ENCODE measurements at regions of chr17 and their contacts with region 1.

Region 1: DNA sequence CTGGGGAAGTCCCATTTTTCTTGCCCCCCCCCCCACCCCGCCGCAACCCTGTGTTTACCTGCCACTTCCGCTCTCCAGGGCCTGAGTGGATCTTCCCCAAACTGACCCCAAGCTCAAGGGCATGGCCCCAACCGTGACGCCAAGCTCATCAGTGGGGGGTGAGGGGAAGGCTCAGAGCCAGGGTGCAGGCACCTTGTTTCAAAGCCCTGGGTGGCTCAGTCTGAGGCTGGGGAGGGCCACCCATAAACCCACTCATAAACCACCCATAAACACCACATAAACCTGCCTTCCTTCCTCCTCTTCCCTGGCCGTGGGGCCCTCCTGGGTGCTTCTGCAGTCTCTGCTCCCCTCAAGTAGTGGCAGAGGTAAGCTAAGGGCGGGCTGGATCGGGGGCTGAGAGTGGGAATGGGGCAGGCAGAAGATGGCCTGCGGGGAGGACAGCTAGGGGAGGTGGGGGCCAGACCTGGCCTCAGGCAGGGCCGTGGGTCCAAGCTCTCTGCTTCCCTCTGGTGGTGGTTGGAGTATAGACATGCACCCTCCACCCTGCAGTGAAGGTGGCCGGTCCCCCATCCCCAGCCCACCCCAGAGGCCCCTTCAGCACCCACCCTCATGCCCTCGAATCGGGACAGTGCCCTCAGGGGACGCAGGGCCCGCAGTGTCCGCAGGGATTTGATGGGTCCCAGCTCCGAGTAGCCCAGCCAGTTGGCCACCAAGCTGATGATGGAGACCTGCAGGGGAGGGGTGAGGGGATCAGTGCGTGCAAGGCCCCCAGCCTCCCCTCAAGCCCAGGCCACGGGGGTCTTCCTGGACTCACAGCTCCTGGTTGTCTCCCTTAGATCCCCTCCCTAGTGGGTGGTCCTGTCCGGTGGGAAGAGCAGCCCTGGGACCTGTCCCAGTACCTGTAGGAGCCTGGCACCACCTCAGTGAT is 14.6 kb upstream of the CD79B start:
- DNase-seq: peak; percentile 53 to 65 (median 63)
- H3K4me3 ChIP-seq: peak overlapping the region in 1 of 3 experiments; percentile 72
- H3K4me3 Mint-ChIP-seq: peak overlapping the region; percentile 52 to 77
- H3K27ac ChIP-seq: no peak overlapping the region
- H3K27ac Mint-ChIP-seq: peak overlapping the region in 3 of 7 donors; percentile 43 to 86 (median 84)
- H3K4me1 ChIP-seq: peaks cover 9 to 10% of the 10 kb centered on the region in 2 donors
- H3K4me1 Mint-ChIP-seq: peaks cover 6% of the 10 kb centered on the region
- H3K27me3 ChIP-seq: no peaks in the 10 kb centered on the region
- H3K27me3 Mint-ChIP-seq: peaks cover 0 to 7% (median 4%) of the 10 kb centered on the region in 3 donors
- CTCF ChIP-seq: peak; percentile 94

Region 2: GRCh38 chr17:63904316-63904715 is 42.4 kb before region 1 on chr17:
- intact Hi-C with region 1: loop called in 1 of 2 experiments (anchors 5 kb)
- DNase-seq: no peak
- H3K4me3 ChIP-seq: no peak overlapping the region
- H3K4me3 Mint-ChIP-seq: no peak overlapping the region
- H3K27ac ChIP-seq: no peak overlapping the region
- H3K27ac Mint-ChIP-seq: no peak overlapping the region
- H3K4me1 ChIP-seq: no peaks in the 10 kb centered on the region
- H3K4me1 Mint-ChIP-seq: peaks cover 3% of the 10 kb centered on the region
- H3K27me3 ChIP-seq: no peaks in the 10 kb centered on the region
- H3K27me3 Mint-ChIP-seq: peaks cover 1 to 8% (median 7%) of the 10 kb centered on the region in 3 donors
- CTCF ChIP-seq: no peak

Region 3: GRCh38 chr17:63919311-63919723 is 27.4 kb before region 1 on chr17:
- intact Hi-C with region 1: loop called in 1 of 2 experiments (anchors 2 kb)
- DNase-seq: peak; percentile 65 to 76 (median 71)
- H3K4me3 ChIP-seq: no peak overlapping the region
- H3K4me3 Mint-ChIP-seq: no peak overlapping the region
- H3K27ac ChIP-seq: no peak overlapping the region
- H3K27ac Mint-ChIP-seq: peak overlapping the region in 2 of 7 donors; percentile 47 to 55
- H3K4me1 ChIP-seq: peaks cover 0 to 5% of the 10 kb centered on the region in 2 donors
- H3K4me1 Mint-ChIP-seq: peaks cover 24% of the 10 kb centered on the region
- H3K27me3 ChIP-seq: no peaks in the 10 kb centered on the region
- H3K27me3 Mint-ChIP-seq: peaks cover 3 to 9% (median 4%) of the 10 kb centered on the region in 3 donors
- CTCF ChIP-seq: peak; percentile 90

Measured in CD14-positive monocyte (primary cell).